IMR-90 (cell line): ENCODE measurements at regions of chr6 and their contacts with region 1.

Region 1: GRCh38 chr6:34723203-34723602 is 26.6 kb upstream of the ILRUN start:
- DNase-seq: peak; percentile 69
- ATAC-seq: peak; percentile 79
- H3K4me3 ChIP-seq: no peak overlapping the region
- H3K27ac ChIP-seq: peak overlapping the region; percentile 47; the same call in 1 of the 2 replicates
- H3K4me1 ChIP-seq: peaks cover 3% of the 10 kb centered on the region
- H3K27me3 ChIP-seq: no peaks in the 10 kb centered on the region
- CTCF ChIP-seq: no peak
- POLR2A ChIP-seq: no peak
- RAD21 ChIP-seq: no peak

Region 2: DNA sequence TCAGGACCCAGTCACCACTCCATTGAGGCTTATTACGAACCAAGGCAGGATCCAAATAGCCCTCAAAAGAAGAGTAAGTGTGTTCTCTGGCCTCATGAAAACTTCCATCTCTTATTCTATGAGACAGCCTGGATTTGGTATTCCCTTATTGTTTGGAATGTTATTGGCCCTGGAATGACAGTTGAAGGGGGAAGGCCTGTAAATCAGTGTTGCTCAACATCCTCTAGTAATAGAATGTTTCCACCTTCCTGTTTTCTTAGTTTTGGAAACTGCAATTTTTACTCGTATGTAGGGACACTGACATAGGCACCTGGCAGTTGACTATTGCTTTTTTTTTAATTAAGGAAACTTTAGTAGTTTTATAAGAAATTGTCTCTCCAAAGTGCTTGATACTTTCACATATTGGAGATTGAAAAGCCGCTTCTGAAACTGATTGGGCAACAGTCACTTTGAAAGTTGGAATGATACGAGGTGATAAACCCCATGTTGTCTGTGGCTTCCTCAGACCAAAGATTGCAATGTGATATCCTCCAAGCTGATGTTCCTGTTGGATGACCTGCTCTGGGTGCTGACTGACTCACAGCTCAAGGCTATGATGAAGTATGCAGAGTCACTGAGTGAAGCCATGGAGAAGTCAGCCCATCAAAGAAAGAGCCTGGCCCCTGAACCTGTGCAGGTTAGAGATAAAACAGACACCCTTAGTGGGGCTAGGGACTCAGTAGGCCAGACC is 111.8 kb after region 1 on chr6:
- CTCF ChIA-PET with region 1: interaction called, 10 read pairs
- POLR2A ChIA-PET with region 1: no interaction called
- dilution Hi-C with region 1: no loop called
- in situ Hi-C with region 1: no loop called
- intact Hi-C with region 1: no loop called
- DNase-seq: peak; percentile 72
- ATAC-seq: peak; percentile 80
- H3K4me3 ChIP-seq: no peak overlapping the region
- H3K27ac ChIP-seq: no peak overlapping the region
- H3K4me1 ChIP-seq: no peaks in the 10 kb centered on the region; the same call in 1 of the 2 replicates
- H3K27me3 ChIP-seq: no peaks in the 10 kb centered on the region
- CTCF ChIP-seq: no peak
- POLR2A ChIP-seq: no peak
- RAD21 ChIP-seq: no peak

Region 3: DNA sequence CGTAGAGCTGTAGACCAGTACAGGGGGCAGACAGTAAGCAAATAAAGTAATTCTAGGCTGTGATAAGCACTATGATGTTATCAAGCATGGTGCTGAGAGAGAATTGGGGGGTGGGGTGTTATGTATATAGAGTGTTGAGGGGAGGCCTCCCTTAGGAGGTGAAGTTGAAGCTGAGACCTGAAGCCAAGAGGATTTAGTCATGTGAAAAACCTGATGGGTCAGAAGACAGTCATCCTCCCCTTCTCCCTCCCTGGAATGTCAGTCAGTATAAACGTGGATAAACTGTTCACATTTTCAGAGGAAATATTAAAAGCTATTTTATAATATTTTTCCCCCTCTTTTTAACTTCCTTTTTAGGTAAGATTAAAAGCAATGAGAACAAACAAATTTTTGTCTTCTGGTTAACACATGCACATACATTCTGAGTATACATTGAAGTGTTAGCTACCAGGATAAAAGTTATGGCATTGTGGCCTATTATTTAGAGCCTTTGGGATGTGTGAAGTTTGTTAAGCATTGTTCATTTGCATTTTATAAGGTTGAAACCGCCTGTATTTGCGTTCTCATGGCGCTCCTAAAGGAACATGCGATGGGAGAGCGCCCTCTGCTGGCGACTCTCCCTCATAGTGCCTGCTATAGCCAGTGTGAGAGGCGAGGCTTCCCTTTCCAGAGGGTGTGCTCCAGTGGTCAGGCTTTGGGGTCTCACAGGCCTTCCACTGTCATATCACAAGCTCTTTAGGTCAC is 1371.7 kb after region 1 on chr6:
- CTCF ChIA-PET with region 1: no interaction called
- POLR2A ChIA-PET with region 1: no interaction called
- dilution Hi-C with region 1: no loop called
- in situ Hi-C with region 1: no loop called
- intact Hi-C with region 1: no loop called
- DNase-seq: peak; percentile 71
- ATAC-seq: peak; percentile 96
- H3K4me3 ChIP-seq: no peak overlapping the region
- H3K27ac ChIP-seq: no peak overlapping the region
- H3K4me1 ChIP-seq: peaks cover 2% of the 10 kb centered on the region; the same call in 1 of the 2 replicates
- H3K27me3 ChIP-seq: no peaks in the 10 kb centered on the region
- CTCF ChIP-seq: peak; percentile 95
- POLR2A ChIP-seq: peak; percentile 51; the same call in 1 of the 2 replicates
- RAD21 ChIP-seq: peak; percentile 94